IMR-90 (cell line): ENCODE measurements at regions of chr15 and their contacts with region 1.

Region 1: GRCh38 chr15:55710286-55710685 is 32.7 kb downstream of the PRTG start:
- DNase-seq: no peak
- ATAC-seq: no peak
- H3K4me3 ChIP-seq: no peak overlapping the region
- H3K27ac ChIP-seq: no peak overlapping the region
- H3K4me1 ChIP-seq: no peaks in the 10 kb centered on the region
- H3K27me3 ChIP-seq: peaks cover 5% of the 10 kb centered on the region
- CTCF ChIP-seq: no peak
- POLR2A ChIP-seq: no peak
- RAD21 ChIP-seq: no peak

Region 2: DNA sequence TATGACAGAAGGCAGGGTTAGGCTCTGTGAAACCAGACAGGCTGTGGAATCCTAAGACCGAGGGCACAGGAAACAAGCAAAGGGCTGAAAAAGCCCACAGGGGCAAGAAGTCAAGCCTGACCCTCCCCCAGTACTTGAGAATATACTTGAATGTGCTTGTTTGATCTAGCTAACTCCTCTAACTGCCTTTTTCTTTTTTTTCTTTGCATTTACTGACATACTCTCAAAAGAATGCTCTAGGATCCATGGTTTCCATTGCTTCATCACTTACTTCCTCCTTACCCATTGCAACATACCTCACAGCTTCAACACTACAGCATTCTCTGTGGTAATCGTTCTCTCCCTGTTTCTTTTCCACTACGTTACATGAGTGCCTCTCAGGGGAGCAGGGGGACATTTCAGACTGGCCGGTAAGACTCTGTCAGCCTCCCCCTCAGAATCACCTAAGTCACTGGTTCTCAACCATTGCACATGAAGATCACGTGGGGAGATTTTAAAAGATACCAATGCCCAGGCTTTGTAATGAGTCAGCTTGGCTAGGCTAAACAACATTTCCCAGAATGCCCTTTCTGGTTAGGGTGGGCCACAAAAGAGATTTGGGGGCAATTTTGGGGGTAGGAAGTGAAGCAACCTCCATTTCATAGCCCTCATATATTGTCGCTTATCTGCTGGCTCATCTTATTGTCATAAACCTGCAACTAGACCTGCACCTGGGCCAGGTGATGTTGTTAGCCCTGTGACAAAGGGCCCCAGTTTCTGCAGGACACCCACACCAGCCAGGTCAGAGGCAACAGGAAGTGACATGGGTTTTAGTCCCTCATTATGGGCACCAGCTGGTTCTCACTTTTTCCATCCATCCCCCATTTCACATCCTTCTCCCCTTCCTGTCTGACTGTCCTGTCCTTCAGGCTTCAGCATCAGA is 488.9 kb before region 1 on chr15:
- CTCF ChIA-PET with region 1: no interaction called
- POLR2A ChIA-PET with region 1: no interaction called
- dilution Hi-C with region 1: no loop called
- in situ Hi-C with region 1: no loop called
- intact Hi-C with region 1: no loop called
- DNase-seq: peak; percentile 96
- ATAC-seq: peak; percentile 84
- H3K4me3 ChIP-seq: peak overlapping the region; percentile 11; the same call in 1 of the 2 replicates
- H3K27ac ChIP-seq: peak overlapping the region; percentile 96
- H3K4me1 ChIP-seq: peaks cover 11% of the 10 kb centered on the region
- H3K27me3 ChIP-seq: no peaks in the 10 kb centered on the region
- CTCF ChIP-seq: no peak
- POLR2A ChIP-seq: peak; percentile 34; the same call in 1 of the 2 replicates
- RAD21 ChIP-seq: no peak

Region 3: DNA sequence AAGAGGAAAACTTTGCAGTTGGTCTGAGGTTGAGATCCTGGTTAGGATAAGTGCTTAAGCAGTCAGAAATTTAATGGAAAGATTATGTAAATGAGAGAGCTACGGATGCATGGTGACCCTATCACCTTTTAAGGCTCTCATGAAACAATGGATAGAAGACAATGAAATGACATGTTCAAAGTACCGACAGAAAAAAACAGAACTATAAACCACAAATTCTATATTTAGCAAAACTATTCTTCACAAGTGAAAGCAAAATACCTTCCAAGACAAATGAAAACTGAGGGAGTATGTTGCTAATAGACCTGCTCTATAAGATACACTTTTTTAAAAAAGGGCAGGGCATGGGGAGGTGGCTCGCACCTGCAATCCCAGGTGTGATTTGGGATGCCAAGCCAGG is 234.4 kb before region 1 on chr15:
- CTCF ChIA-PET with region 1: no interaction called
- POLR2A ChIA-PET with region 1: no interaction called
- dilution Hi-C with region 1: no loop called
- in situ Hi-C with region 1: no loop called
- intact Hi-C with region 1: no loop called
- DNase-seq: no peak
- ATAC-seq: no peak
- H3K4me3 ChIP-seq: no peak overlapping the region
- H3K27ac ChIP-seq: no peak overlapping the region
- H3K4me1 ChIP-seq: no peaks in the 10 kb centered on the region
- H3K27me3 ChIP-seq: no peaks in the 10 kb centered on the region
- CTCF ChIP-seq: no peak
- POLR2A ChIP-seq: no peak
- RAD21 ChIP-seq: no peak

Region 4: GRCh38 chr15:55696221-55696620 is 14.1 kb before region 1 on chr15:
- CTCF ChIA-PET with region 1: no interaction called
- POLR2A ChIA-PET with region 1: no interaction called
- dilution Hi-C with region 1: no loop called
- in situ Hi-C with region 1: no loop called
- intact Hi-C with region 1: loop called (anchors 2 kb)
- DNase-seq: peak; percentile 78
- ATAC-seq: peak; percentile 68
- H3K4me3 ChIP-seq: no peak overlapping the region
- H3K27ac ChIP-seq: no peak overlapping the region
- H3K4me1 ChIP-seq: peaks cover 7% of the 10 kb centered on the region
- H3K27me3 ChIP-seq: peaks cover 29% of the 10 kb centered on the region
- CTCF ChIP-seq: no peak
- POLR2A ChIP-seq: no peak
- RAD21 ChIP-seq: no peak

Region 5: GRCh38 chr15:55789066-55789660 is 78.9 kb after region 1 on chr15:
- CTCF ChIA-PET with region 1: no interaction called
- POLR2A ChIA-PET with region 1: interaction called, 12 read pairs
- dilution Hi-C with region 1: no loop called
- in situ Hi-C with region 1: no loop called
- intact Hi-C with region 1: no loop called
- DNase-seq: no peak
- ATAC-seq: no peak
- H3K4me3 ChIP-seq: no peak overlapping the region
- H3K27ac ChIP-seq: no peak overlapping the region
- H3K4me1 ChIP-seq: peaks cover 8% of the 10 kb centered on the region
- H3K27me3 ChIP-seq: peaks cover 2% of the 10 kb centered on the region
- CTCF ChIP-seq: peak; percentile 35; the same call in 1 of the 2 replicates
- POLR2A ChIP-seq: no peak
- RAD21 ChIP-seq: no peak